CD8-positive, alpha-beta memory T cell (primary cell): ENCODE measurements at regions of chr11 and their contacts with region 1.

Region 1: DNA sequence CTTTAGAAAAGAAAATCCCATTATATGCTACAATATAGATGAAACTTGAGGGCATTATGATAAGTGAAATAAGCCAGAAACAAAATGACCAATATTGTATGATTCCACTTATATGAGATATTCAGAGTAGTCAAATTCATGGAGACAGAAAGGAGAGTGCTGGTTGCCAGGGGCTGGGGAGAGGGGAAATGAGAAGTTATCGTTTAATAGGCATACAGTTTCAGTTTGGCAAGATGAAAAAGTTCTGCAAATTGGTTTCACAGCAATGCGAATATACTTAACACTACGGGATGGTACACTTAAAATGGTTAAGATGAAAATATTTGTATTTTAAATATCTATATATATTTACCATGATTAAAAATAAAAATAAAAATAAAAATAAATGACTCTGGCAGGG is 31.1 kb upstream of the RDX start:
- DNase-seq: no peak
- H3K4me3 ChIP-seq: no peak overlapping the region
- H3K4me3 Mint-ChIP-seq: peak overlapping the region; percentile 62 to 92 (median 86)
- H3K27ac ChIP-seq: no peak overlapping the region
- H3K27ac Mint-ChIP-seq: peak overlapping the region in 7 of 8 donors; percentile 13 to 95 (median 35)
- H3K4me1 ChIP-seq: no peaks in the 10 kb centered on the region
- H3K4me1 Mint-ChIP-seq: peaks cover 18 to 34% (median 20%) of the 10 kb centered on the region in 3 donors
- H3K27me3 ChIP-seq: no peaks in the 10 kb centered on the region
- H3K27me3 Mint-ChIP-seq: peaks cover 0 to under 1% of the 10 kb centered on the region in 2 donors

Region 2: GRCh38 chr11:110349138-110349996 is 21.9 kb after region 1 on chr11:
- CTCF ChIA-PET with region 1: no interaction called
- POLR2A ChIA-PET with region 1: interaction called, 17 read pairs
- DNase-seq: no peak
- H3K4me3 ChIP-seq: no peak overlapping the region
- H3K4me3 Mint-ChIP-seq: peak overlapping the region in 6 of 7 donors; percentile 43 to 82 (median 60)
- H3K27ac ChIP-seq: no peak overlapping the region
- H3K27ac Mint-ChIP-seq: peak overlapping the region; percentile 30 to 94 (median 79)
- H3K4me1 ChIP-seq: peaks cover 24% of the 10 kb centered on the region
- H3K4me1 Mint-ChIP-seq: peaks cover 31 to 42% (median 37%) of the 10 kb centered on the region in 3 donors
- H3K27me3 ChIP-seq: no peaks in the 10 kb centered on the region
- H3K27me3 Mint-ChIP-seq: no peaks in the 10 kb centered on the region